WTC11 (cell line): ENCODE measurements at regions of chr19 and their contacts with region 1.

Region 1: DNA sequence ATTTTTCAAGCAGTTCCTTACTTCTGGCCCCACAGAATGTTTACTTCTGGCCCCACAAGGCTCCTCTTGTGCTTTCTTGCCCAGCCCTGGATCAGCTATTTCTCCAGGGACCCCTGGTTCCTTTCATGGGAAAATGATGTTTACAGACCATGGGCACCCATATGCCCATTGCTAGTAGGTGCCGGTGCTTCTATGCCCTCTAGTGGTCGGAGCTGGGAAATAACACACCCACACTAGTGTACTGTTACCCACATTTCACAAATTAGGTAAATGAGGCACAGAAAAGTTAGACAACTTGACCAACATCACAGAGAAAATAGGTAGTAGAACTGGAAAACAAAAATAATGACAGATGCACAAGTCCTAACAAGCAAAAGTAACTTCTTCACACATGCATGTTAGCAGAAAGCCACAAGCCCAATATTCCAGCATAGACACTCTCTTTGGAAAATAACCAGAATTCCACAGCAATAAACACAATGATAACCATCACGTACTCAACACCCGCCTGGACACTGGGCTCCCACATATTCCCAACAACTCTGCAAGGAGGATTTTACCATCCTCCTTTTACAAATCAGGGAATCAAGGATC is 1.3 kb upstream of the CEACAM6 start:
- DNase-seq: peak; percentile 79
- ATAC-seq: peak; percentile 81
- H3K4me3 Mint-ChIP-seq: no peak overlapping the region
- H3K27ac Mint-ChIP-seq: peak overlapping the region; percentile 48; the same call in 1 of the 2 replicates
- H3K4me1 Mint-ChIP-seq: peaks cover 2% of the 10 kb centered on the region; the same call in 1 of the 2 replicates
- H3K27me3 Mint-ChIP-seq: peaks cover 6% of the 10 kb centered on the region
- CTCF ChIP-seq: peak; percentile 74

Region 2: DNA sequence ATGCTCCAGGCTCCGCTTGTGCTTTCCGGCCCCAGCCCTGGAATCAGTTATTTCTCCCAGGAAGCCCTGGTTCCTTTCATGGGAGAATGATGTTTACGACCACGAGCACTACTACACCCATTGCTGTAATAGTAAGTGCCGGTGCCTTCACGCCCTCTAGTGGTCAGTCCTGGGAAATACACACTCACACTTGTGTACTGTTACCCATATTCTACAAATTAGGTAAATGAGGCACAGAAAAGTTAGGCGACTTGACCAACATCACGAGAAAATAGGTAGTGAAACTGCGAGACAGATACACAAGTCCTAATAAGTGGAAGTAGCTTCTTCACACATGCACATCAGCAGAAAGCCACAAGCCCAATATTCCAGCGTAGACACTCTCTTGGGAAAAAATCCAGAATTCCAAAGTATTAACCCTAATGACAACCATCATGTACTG is 156.4 kb before region 1 on chr19:
- CTCF ChIA-PET with region 1: interaction called, 13 read pairs
- POLR2A ChIA-PET with region 1: no interaction called
- DNase-seq: peak; percentile 80
- ATAC-seq: peak; percentile 84
- H3K4me3 Mint-ChIP-seq: no peak overlapping the region
- H3K27ac Mint-ChIP-seq: no peak overlapping the region
- H3K4me1 Mint-ChIP-seq: peaks cover 16% of the 10 kb centered on the region
- H3K27me3 Mint-ChIP-seq: peaks cover 78% of the 10 kb centered on the region
- CTCF ChIP-seq: peak; percentile 96

Region 3: GRCh38 chr19:41701401-41702075 is 52.5 kb before region 1 on chr19:
- CTCF ChIA-PET with region 1: interaction called, 131 read pairs
- POLR2A ChIA-PET with region 1: no interaction called
- DNase-seq: peak; percentile 73
- ATAC-seq: peak; percentile 78
- H3K4me3 Mint-ChIP-seq: no peak overlapping the region
- H3K27ac Mint-ChIP-seq: no peak overlapping the region
- H3K4me1 Mint-ChIP-seq: no peaks in the 10 kb centered on the region
- H3K27me3 Mint-ChIP-seq: peaks cover 13% of the 10 kb centered on the region
- CTCF ChIP-seq: peak; percentile 61

Region 4: GRCh38 chr19:41740415-41741243 is 13.4 kb before region 1 on chr19:
- CTCF ChIA-PET with region 1: interaction called, 25 read pairs
- POLR2A ChIA-PET with region 1: interaction called, 6 read pairs
- DNase-seq: no peak
- ATAC-seq: no peak
- H3K4me3 Mint-ChIP-seq: no peak overlapping the region
- H3K27ac Mint-ChIP-seq: no peak overlapping the region
- H3K4me1 Mint-ChIP-seq: no peaks in the 10 kb centered on the region
- H3K27me3 Mint-ChIP-seq: peaks cover 14% of the 10 kb centered on the region
- CTCF ChIP-seq: no peak

Region 5: GRCh38 chr19:41785653-41786052 is 31.6 kb after region 1 on chr19:
- CTCF ChIA-PET with region 1: interaction called, 131 read pairs
- POLR2A ChIA-PET with region 1: no interaction called
- DNase-seq: peak; percentile 73
- ATAC-seq: peak; percentile 95
- H3K4me3 Mint-ChIP-seq: peak overlapping the region; percentile 62
- H3K27ac Mint-ChIP-seq: no peak overlapping the region
- H3K4me1 Mint-ChIP-seq: peaks cover 6% of the 10 kb centered on the region
- H3K27me3 Mint-ChIP-seq: peaks cover 43% of the 10 kb centered on the region
- CTCF ChIP-seq: peak; percentile 76

Region 6: GRCh38 chr19:41811036-41811435 is 57.0 kb after region 1 on chr19:
- CTCF ChIA-PET with region 1: interaction called, 14 read pairs
- POLR2A ChIA-PET with region 1: no interaction called
- DNase-seq: no peak
- ATAC-seq: no peak
- H3K4me3 Mint-ChIP-seq: no peak overlapping the region
- H3K27ac Mint-ChIP-seq: no peak overlapping the region
- H3K4me1 Mint-ChIP-seq: no peaks in the 10 kb centered on the region
- H3K27me3 Mint-ChIP-seq: no peaks in the 10 kb centered on the region; the same call in 1 of the 2 replicates
- CTCF ChIP-seq: no peak

Region 7: GRCh38 chr19:41879670-41880328 is 125.8 kb after region 1 on chr19:
- CTCF ChIA-PET with region 1: no interaction called
- POLR2A ChIA-PET with region 1: no interaction called
- DNase-seq: no peak
- ATAC-seq: no peak
- H3K4me3 Mint-ChIP-seq: no peak overlapping the region
- H3K27ac Mint-ChIP-seq: no peak overlapping the region
- H3K4me1 Mint-ChIP-seq: peaks cover 15% of the 10 kb centered on the region
- H3K27me3 Mint-ChIP-seq: peaks cover 42% of the 10 kb centered on the region
- CTCF ChIP-seq: no peak